T-cell (primary cell): ENCODE measurements at regions of chr20 and their contacts with region 1.

Region 1: GRCh38 chr20:47493175-47493962 is 8.3 kb upstream of the NCOA3 start:
- DNase-seq: peak in 29 of 35 experiments; percentile 8 to 65 (median 34)
- ATAC-seq: peak; percentile 58 to 68 (median 64)
- H3K4me3 ChIP-seq: no peak overlapping the region
- H3K4me3 Mint-ChIP-seq: peak overlapping the region in 1 of 3 donors; percentile 28
- H3K27ac ChIP-seq: no peak overlapping the region
- H3K27ac Mint-ChIP-seq: peak overlapping the region; percentile 23 to 52
- H3K4me1 ChIP-seq: peaks cover 8 to 30% of the 10 kb centered on the region in 2 experiments
- H3K4me1 Mint-ChIP-seq: peaks cover 28 to 39% (median 34%) of the 10 kb centered on the region in 3 donors
- H3K27me3 ChIP-seq: no peaks in the 10 kb centered on the region
- H3K27me3 Mint-ChIP-seq: no peaks in the 10 kb centered on the region

Region 2: GRCh38 chr20:46255429-46256104 is 1237.8 kb before region 1 on chr20:
- CTCF ChIA-PET with region 1: no interaction called
- POLR2A ChIA-PET with region 1: no interaction called
- DNase-seq: peak in 10 of 35 experiments; percentile 3 to 39 (median 11)
- ATAC-seq: no peak
- H3K4me3 ChIP-seq: no peak overlapping the region
- H3K4me3 Mint-ChIP-seq: no peak overlapping the region
- H3K27ac ChIP-seq: no peak overlapping the region
- H3K27ac Mint-ChIP-seq: no peak overlapping the region
- H3K4me1 ChIP-seq: no peaks in the 10 kb centered on the region
- H3K4me1 Mint-ChIP-seq: peaks cover 0 to 2% (median 0%) of the 10 kb centered on the region in 3 donors
- H3K27me3 ChIP-seq: peaks cover 3 to 56% of the 10 kb centered on the region in 2 experiments
- H3K27me3 Mint-ChIP-seq: peaks cover 26 to 45% of the 10 kb centered on the region in 2 donors

Region 3: DNA sequence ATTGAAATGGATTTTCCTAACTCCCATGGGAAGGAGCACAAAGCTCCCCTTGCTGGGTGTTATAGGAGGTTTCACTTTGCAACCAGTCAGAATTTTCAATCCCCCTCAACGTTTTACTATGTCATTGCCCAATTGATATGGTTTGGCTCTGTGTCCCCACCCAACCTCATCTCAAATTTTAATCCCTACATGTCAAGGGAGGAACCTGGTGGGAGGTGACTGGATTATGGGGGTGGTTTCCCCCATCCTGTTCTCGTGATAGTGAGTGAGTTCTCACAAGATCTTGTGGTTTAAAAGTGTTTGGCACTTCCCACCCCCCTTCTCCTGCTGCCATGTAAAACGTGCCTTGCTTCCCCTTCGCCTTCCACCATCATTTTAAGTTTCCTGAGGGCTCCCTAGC is 199.7 kb before region 1 on chr20:
- CTCF ChIA-PET with region 1: no interaction called
- POLR2A ChIA-PET with region 1: no interaction called
- DNase-seq: no peak
- ATAC-seq: no peak
- H3K4me3 ChIP-seq: no peak overlapping the region
- H3K4me3 Mint-ChIP-seq: no peak overlapping the region
- H3K27ac ChIP-seq: no peak overlapping the region
- H3K27ac Mint-ChIP-seq: peak overlapping the region in 1 of 2 donors; percentile 44
- H3K4me1 ChIP-seq: no peaks in the 10 kb centered on the region
- H3K4me1 Mint-ChIP-seq: peaks cover 0 to 3% (median 0%) of the 10 kb centered on the region in 3 donors
- H3K27me3 ChIP-seq: no peaks in the 10 kb centered on the region
- H3K27me3 Mint-ChIP-seq: no peaks in the 10 kb centered on the region

Region 4: DNA sequence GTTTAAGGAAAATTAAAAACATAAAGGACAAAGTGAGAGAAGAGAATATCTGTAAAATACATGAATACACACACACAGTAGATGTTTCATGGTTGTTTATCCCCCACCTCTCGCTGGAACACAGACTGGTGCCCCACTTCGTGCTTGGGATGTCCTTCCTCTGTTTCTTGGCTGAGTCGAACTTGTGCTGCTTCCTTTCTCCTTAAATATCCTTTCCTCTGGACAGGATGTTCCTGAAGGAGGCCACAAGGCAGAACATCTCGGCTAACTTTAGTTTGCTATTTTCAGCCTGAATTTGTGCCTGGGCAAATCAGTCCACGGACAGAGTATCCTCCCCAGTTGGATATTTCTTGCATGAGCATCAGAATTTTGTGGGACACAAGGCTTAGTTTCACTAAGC is 82.2 kb before region 1 on chr20:
- CTCF ChIA-PET with region 1: no interaction called
- POLR2A ChIA-PET with region 1: no interaction called
- DNase-seq: no peak
- ATAC-seq: no peak
- H3K4me3 ChIP-seq: no peak overlapping the region
- H3K4me3 Mint-ChIP-seq: no peak overlapping the region
- H3K27ac ChIP-seq: no peak overlapping the region
- H3K27ac Mint-ChIP-seq: no peak overlapping the region
- H3K4me1 ChIP-seq: peaks cover 0 to 26% of the 10 kb centered on the region in 2 experiments
- H3K4me1 Mint-ChIP-seq: peaks cover 27 to 30% (median 28%) of the 10 kb centered on the region in 3 donors
- H3K27me3 ChIP-seq: no peaks in the 10 kb centered on the region
- H3K27me3 Mint-ChIP-seq: no peaks in the 10 kb centered on the region

Region 5: GRCh38 chr20:47533518-47534062 is 40.2 kb after region 1 on chr20:
- CTCF ChIA-PET with region 1: no interaction called
- POLR2A ChIA-PET with region 1: interaction called in 1 of 2 experiments, 17 read pairs
- DNase-seq: no peak
- ATAC-seq: no peak
- H3K4me3 ChIP-seq: no peak overlapping the region
- H3K4me3 Mint-ChIP-seq: no peak overlapping the region
- H3K27ac ChIP-seq: no peak overlapping the region
- H3K27ac Mint-ChIP-seq: no peak overlapping the region
- H3K4me1 ChIP-seq: peaks cover 0 to 6% of the 10 kb centered on the region in 2 experiments
- H3K4me1 Mint-ChIP-seq: peaks cover 39 to 59% (median 57%) of the 10 kb centered on the region in 3 donors
- H3K27me3 ChIP-seq: no peaks in the 10 kb centered on the region
- H3K27me3 Mint-ChIP-seq: no peaks in the 10 kb centered on the region

Region 6: GRCh38 chr20:47551841-47552240 is 58.5 kb after region 1 on chr20:
- CTCF ChIA-PET with region 1: no interaction called
- POLR2A ChIA-PET with region 1: interaction called in 1 of 2 experiments, 12 read pairs
- DNase-seq: no peak
- ATAC-seq: no peak
- H3K4me3 ChIP-seq: no peak overlapping the region
- H3K4me3 Mint-ChIP-seq: no peak overlapping the region
- H3K27ac ChIP-seq: no peak overlapping the region
- H3K27ac Mint-ChIP-seq: no peak overlapping the region
- H3K4me1 ChIP-seq: peaks cover 0 to 5% of the 10 kb centered on the region in 2 experiments
- H3K4me1 Mint-ChIP-seq: peaks cover 27 to 57% (median 48%) of the 10 kb centered on the region in 3 donors
- H3K27me3 ChIP-seq: no peaks in the 10 kb centered on the region
- H3K27me3 Mint-ChIP-seq: no peaks in the 10 kb centered on the region